ENCODE measurements at regions of chr7 and their contacts with region 1.

Region 1: GRCh38 chr7:20440472-20441105 is 109.9 kb downstream of the ITGB8 start:
- DNase-seq: peak; percentile 64 to 86
- H3K4me3 ChIP-seq: no peak overlapping the region
- H3K27ac ChIP-seq: no peak overlapping the region
- H3K4me1 ChIP-seq: no peaks in the 10 kb centered on the region; a peak in 1 of 7 replicates
- H3K27me3 ChIP-seq: no peaks in the 10 kb centered on the region
- CTCF ChIP-seq: peak; percentile 70 to 76 (median 70)
- EP300 ChIP-seq: no peak
- POLR2A ChIP-seq: no peak
- RAD21 ChIP-seq: peak; percentile 72

Region 2: GRCh38 chr7:19747740-19748339 is 692.7 kb before region 1 on chr7:
- CTCF ChIA-PET with region 1: interaction called, 11 read pairs
- POLR2A ChIA-PET with region 1: no interaction called
- DNase-seq: no peak
- H3K4me3 ChIP-seq: no peak overlapping the region
- H3K27ac ChIP-seq: no peak overlapping the region
- H3K4me1 ChIP-seq: no peaks in the 10 kb centered on the region
- H3K27me3 ChIP-seq: no peaks in the 10 kb centered on the region
- CTCF ChIP-seq: peak in 2 of 3 experiments; percentile 45 to 61; a peak in 2 of 4 replicates
- EP300 ChIP-seq: no peak
- POLR2A ChIP-seq: no peak
- RAD21 ChIP-seq: peak; percentile 74 to 77

Region 3: GRCh38 chr7:20424500-20424899 is 16.1 kb before region 1 on chr7:
- CTCF ChIA-PET with region 1: interaction called, 12 read pairs
- POLR2A ChIA-PET with region 1: no interaction called
- DNase-seq: no peak
- H3K4me3 ChIP-seq: no peak overlapping the region
- H3K27ac ChIP-seq: no peak overlapping the region
- H3K4me1 ChIP-seq: no peaks in the 10 kb centered on the region
- H3K27me3 ChIP-seq: no peaks in the 10 kb centered on the region
- CTCF ChIP-seq: no peak
- EP300 ChIP-seq: no peak
- POLR2A ChIP-seq: no peak
- RAD21 ChIP-seq: no peak

Region 4: DNA sequence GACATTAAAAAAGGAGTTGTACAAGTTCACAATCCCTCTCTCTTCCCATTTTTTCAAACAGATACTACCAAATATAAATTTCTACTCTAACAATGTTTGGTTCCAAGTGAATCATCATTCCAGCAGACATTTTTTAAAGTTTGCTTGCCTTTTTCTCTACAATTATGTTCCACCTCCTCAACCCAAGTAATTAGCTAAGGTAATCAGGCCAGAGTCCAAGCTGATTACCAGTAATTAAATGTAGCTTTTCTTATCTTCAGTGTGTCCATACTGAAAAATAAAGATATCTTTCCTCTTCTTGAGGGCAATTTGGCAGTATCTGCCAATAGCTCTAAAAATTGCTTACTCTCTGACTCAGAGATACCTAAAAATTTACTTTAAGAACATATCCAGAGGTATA is 16.1 kb after region 1 on chr7:
- CTCF ChIA-PET with region 1: interaction called, 10 read pairs
- POLR2A ChIA-PET with region 1: no interaction called
- DNase-seq: no peak
- H3K4me3 ChIP-seq: no peak overlapping the region
- H3K27ac ChIP-seq: no peak overlapping the region
- H3K4me1 ChIP-seq: no peaks in the 10 kb centered on the region
- H3K27me3 ChIP-seq: no peaks in the 10 kb centered on the region
- CTCF ChIP-seq: no peak
- EP300 ChIP-seq: no peak
- POLR2A ChIP-seq: no peak
- RAD21 ChIP-seq: no peak

Measured in H1 (cell line).